ENCODE measurements at regions of chr3 and their contacts with region 1.

Region 1: DNA sequence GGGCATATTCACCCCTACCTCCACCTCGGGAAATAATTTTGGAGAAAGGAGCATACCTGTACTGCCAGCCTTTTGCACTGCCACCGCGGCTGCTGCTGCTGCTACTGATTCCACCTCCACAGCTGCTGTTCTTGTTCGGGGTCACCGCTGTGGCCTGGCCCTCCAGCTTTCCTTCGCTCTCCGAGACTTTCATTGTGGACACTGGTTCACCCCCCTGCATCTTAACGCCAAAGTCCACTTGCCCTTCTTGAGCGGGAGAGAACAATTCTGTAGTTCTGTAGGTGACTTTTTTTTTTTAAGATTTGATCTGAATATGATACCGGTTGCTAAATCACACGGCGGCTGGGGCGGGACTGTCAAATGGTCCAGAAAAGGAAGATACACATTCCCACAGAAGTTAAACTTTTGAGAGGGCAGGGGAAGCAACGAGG is 701 bp downstream of the OSBPL11 start:
- DNase-seq: no peak
- ATAC-seq: no peak
- H3K4me3 ChIP-seq: peak overlapping the region; percentile 66 to 74
- H3K27ac ChIP-seq: peak overlapping the region; percentile 93
- H3K4me1 ChIP-seq: peaks cover 7% of the 10 kb centered on the region
- H3K27me3 ChIP-seq: no peaks in the 10 kb centered on the region
- CTCF ChIP-seq: no peak

Region 2: GRCh38 chr3:125317761-125318160 is 276.8 kb before region 1 on chr3:
- CTCF ChIA-PET with region 1: no interaction called
- POLR2A ChIA-PET with region 1: interaction called, 10 read pairs
- in situ Hi-C with region 1: no loop called
- intact Hi-C with region 1: no loop called
- DNase-seq: no peak
- ATAC-seq: no peak
- H3K4me3 ChIP-seq: no peak overlapping the region
- H3K27ac ChIP-seq: no peak overlapping the region
- H3K4me1 ChIP-seq: peaks cover 7% of the 10 kb centered on the region; the same call in 1 of the 2 replicates
- H3K27me3 ChIP-seq: no peaks in the 10 kb centered on the region
- CTCF ChIP-seq: no peak

Region 3: GRCh38 chr3:125605756-125606155 is 11.2 kb after region 1 on chr3:
- CTCF ChIA-PET with region 1: interaction called, 3 read pairs
- POLR2A ChIA-PET with region 1: interaction called, 14 read pairs
- in situ Hi-C with region 1: no loop called
- intact Hi-C with region 1: no loop called
- DNase-seq: no peak
- ATAC-seq: no peak
- H3K4me3 ChIP-seq: no peak overlapping the region
- H3K27ac ChIP-seq: no peak overlapping the region
- H3K4me1 ChIP-seq: peaks cover 5% of the 10 kb centered on the region; the same call in 1 of the 2 replicates
- H3K27me3 ChIP-seq: no peaks in the 10 kb centered on the region
- CTCF ChIP-seq: no peak

Region 4: DNA sequence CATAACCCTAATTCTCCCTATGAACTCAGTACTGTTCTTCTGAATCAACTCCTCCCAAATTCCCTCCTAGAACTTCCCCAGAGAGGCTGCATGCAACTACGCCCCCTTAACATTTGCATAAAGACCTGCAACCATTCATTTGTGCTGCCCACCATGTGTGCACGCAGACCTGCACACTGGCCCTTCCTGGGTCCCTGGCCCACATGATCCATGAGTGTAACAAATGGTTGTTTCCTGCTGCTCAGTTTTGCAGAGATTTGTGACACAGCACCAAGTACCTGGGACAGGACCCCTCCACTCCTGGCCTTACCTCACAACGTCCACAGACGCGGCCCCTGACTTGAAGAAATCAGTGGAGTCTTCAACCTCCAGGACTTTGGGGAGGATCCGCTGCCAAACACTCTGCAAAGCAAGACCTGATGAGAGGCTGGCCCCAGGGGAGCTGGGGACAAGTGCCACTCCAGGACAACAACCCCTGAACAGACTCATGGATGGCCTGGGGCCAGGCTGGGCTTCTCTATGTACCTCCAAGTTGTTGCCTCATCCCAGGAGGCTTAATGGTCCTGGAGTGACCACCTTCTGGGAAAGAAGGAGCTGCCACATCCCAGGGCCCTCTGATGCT is 552.0 kb after region 1 on chr3:
- CTCF ChIA-PET with region 1: no interaction called
- POLR2A ChIA-PET with region 1: no interaction called
- in situ Hi-C with region 1: no loop called
- intact Hi-C with region 1: no loop called
- DNase-seq: no peak
- ATAC-seq: no peak
- H3K4me3 ChIP-seq: no peak overlapping the region
- H3K27ac ChIP-seq: no peak overlapping the region
- H3K4me1 ChIP-seq: no peaks in the 10 kb centered on the region
- H3K27me3 ChIP-seq: peaks cover 25% of the 10 kb centered on the region
- CTCF ChIP-seq: no peak

Region 5: DNA sequence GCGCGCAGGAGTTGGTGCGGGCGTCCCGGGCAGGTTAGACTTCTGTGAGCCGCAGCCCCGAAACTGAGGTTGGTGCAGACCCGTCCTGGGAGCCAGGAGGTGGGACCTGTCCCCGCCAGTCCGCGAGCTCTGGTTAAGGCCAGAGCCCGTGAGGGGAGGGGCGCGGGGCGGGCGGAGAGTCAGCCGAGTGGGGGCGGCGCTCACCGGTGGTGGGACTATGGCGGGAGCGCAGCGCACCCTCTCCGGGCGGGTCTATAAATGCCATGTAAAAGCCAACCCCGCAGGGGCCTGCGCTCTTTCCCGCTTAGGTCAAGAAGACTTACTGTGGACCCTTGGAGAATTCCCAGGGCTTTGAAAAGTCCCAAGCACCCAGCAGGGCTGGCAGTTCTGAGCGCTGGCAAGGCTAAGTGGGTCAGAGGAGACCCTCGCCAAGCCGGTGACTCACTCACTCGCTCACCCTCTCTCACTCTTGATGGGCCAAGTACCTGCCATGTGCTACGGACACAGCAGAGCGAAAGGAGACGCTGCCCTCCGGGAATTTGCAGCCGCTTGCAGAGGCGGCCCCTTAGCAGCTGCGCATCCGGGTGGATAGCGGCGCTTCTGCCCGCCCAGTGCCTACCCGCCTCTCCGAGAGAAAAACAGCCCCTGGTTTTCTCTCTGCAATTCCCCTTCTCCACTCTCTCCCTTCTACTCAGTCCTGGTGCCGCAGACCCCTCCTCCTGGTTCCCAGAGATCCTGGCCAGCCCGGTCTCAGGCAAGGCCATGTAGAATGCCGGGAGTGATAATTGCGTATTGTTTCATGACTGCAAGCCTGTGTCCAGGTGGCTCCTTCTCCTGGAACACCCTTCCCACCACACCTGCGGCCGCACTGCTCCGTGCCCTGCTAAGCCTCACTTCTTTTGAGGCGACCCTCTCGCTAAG is 586.1 kb after region 1 on chr3 and contains the start of gene ALDH1L1:
- CTCF ChIA-PET with region 1: no interaction called
- POLR2A ChIA-PET with region 1: no interaction called
- in situ Hi-C with region 1: no loop called
- intact Hi-C with region 1: no loop called
- DNase-seq: no peak
- ATAC-seq: peak; percentile 82
- H3K4me3 ChIP-seq: peak within 1 kb of the TSS; percentile 31 to 46
- H3K27ac ChIP-seq: no peak within 1 kb of the TSS
- H3K4me1 ChIP-seq: no peaks in the 10 kb centered on the region
- H3K27me3 ChIP-seq: peaks cover 14% of the 10 kb centered on the region
- CTCF ChIP-seq: no peak
- total RNA-seq, gene ALDH1L1: 0.36 TPM

Measured in Panc1 (cell line).